ENCODE measurements at regions of chr15 and their contacts with region 1.

Region 1: GRCh38 chr15:78108299-78109084 is 16.1 kb downstream of the SH2D7 start:
- DNase-seq: peak; percentile 92
- ATAC-seq: peak; percentile 78
- H3K4me3 Mint-ChIP-seq: no peak overlapping the region
- H3K27ac Mint-ChIP-seq: peak overlapping the region; percentile 74
- H3K4me1 Mint-ChIP-seq: peaks cover 60% of the 10 kb centered on the region
- H3K27me3 Mint-ChIP-seq: no peaks in the 10 kb centered on the region

Region 2: DNA sequence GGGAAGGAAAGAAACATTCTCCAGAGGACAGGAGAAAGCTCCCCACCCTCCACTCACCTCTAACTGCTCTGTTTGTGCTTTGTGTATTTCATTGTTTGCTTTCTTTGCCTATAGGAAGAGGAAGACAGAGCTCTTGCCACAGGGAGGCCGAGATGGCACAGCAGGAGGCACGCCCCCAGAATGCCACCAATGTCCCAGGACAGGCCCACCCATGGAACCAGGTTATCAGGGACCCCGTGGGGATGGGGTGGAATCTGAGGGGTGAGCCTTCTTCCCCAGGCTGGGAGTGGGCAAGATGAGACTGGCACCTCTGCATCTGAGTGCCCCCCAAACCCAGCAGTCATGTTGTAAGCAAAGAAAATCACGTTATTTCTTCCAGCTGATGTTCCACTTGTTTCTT is 186.8 kb before region 1 on chr15:
- CTCF ChIA-PET with region 1: no interaction called
- POLR2A ChIA-PET with region 1: no interaction called
- DNase-seq: no peak
- ATAC-seq: no peak
- H3K4me3 Mint-ChIP-seq: no peak overlapping the region
- H3K27ac Mint-ChIP-seq: no peak overlapping the region
- H3K4me1 Mint-ChIP-seq: no peaks in the 10 kb centered on the region
- H3K27me3 Mint-ChIP-seq: peaks cover 5% of the 10 kb centered on the region

Region 3: GRCh38 chr15:78000091-78000926 is 108.2 kb before region 1 on chr15:
- CTCF ChIA-PET with region 1: interaction called, 62 read pairs
- POLR2A ChIA-PET with region 1: no interaction called
- DNase-seq: peak; percentile 77
- ATAC-seq: peak; percentile 89
- H3K4me3 Mint-ChIP-seq: no peak overlapping the region
- H3K27ac Mint-ChIP-seq: peak overlapping the region; percentile 79
- H3K4me1 Mint-ChIP-seq: peaks cover 23% of the 10 kb centered on the region
- H3K27me3 Mint-ChIP-seq: no peaks in the 10 kb centered on the region

Region 4: DNA sequence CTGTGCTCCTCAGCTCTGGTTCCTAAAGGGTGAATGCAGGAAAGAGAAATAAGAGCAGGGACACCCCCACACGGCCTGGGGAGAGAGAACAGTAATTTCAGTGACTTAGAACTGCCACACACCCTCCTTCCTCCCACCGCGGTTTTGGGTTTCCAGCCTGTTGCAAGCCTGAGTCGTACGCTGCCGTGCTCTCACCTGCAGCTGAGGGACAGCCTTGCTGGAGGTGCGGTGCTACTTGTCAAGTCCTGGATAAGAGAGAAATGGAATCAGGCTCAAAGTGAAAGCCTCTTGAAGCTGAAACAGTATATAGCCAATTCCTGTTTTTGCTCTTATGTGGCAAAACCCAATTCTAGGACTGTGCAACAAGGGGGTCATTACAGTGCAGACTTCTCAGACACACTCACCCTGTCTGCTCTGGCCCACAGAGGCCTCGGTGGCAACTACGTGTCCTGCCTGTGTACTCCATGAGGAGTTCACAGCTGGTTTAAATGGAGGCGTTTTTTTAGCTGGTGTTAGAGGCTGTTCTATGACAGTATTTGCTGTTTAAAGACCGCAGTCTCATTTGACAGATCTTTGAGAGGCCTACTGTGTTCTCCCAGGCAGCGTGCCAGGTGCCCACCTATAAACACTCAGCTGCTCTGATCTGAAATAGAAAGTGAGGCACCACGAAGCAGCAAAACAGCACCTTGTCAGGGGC is 73.8 kb before region 1 on chr15:
- CTCF ChIA-PET with region 1: interaction called, 55 read pairs
- POLR2A ChIA-PET with region 1: interaction called, 4 read pairs
- DNase-seq: peak; percentile 90
- ATAC-seq: peak; percentile 91
- H3K4me3 Mint-ChIP-seq: peak overlapping the region; percentile 64
- H3K27ac Mint-ChIP-seq: peak overlapping the region; percentile 79
- H3K4me1 Mint-ChIP-seq: peaks cover 88% of the 10 kb centered on the region
- H3K27me3 Mint-ChIP-seq: no peaks in the 10 kb centered on the region

Region 5: GRCh38 chr15:78056714-78057269 is 51.7 kb before region 1 on chr15:
- CTCF ChIA-PET with region 1: interaction called, 60 read pairs
- POLR2A ChIA-PET with region 1: interaction called, 3 read pairs
- DNase-seq: no peak
- ATAC-seq: peak; percentile 32
- H3K4me3 Mint-ChIP-seq: no peak overlapping the region
- H3K27ac Mint-ChIP-seq: peak overlapping the region; percentile 82
- H3K4me1 Mint-ChIP-seq: peaks cover 85% of the 10 kb centered on the region
- H3K27me3 Mint-ChIP-seq: no peaks in the 10 kb centered on the region

Region 6: DNA sequence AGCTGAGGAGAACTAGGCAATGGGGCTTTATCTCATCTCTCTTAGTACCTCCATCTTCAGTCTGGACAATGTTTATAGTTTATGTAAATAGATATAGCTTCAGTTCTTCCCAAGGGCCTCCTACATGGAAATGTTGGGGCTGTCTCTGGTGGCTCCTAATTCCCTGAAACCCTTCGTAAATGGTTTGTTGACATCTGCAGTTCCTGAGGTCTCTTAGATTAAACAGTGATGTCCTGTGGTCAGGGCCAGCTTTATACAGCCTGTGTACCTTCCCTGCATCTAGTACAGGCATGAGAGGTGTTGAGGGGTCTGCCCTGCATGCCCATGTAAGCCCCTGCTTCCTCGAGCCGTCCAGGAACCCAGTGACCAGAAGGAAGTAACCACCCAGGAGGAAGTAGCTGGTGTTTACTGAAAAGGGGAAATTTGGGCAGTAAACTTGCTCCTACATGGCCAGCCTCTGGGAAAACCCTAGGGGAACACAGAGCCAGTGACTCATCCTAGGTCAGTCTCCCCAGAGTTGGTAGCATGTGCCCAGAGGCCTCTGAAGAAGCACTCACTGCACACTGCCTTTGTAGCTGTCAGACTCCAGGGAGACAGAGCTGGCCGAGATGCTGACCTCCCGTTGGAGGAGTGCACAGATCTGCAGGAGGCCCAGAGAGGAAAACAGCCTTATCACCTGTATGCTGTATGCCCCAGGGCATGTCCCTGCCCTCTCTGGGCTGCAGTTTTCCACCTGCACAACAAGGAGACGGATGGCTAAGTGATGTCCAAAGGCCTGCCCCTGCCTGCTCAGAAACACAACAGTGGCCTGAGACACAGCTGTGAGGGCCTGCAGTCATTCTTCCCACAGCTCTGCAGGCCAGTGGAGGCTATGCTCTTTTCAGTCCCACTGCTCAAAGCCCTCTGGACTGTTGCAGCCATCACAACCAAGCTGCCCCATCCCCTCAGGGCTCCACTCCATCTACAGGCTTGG is 26.1 kb before region 1 on chr15:
- CTCF ChIA-PET with region 1: interaction called, 25 read pairs
- POLR2A ChIA-PET with region 1: interaction called, 7 read pairs
- DNase-seq: no peak
- ATAC-seq: no peak
- H3K4me3 Mint-ChIP-seq: no peak overlapping the region
- H3K27ac Mint-ChIP-seq: peak overlapping the region; percentile 80
- H3K4me1 Mint-ChIP-seq: peaks cover 53% of the 10 kb centered on the region
- H3K27me3 Mint-ChIP-seq: no peaks in the 10 kb centered on the region

Region 7: DNA sequence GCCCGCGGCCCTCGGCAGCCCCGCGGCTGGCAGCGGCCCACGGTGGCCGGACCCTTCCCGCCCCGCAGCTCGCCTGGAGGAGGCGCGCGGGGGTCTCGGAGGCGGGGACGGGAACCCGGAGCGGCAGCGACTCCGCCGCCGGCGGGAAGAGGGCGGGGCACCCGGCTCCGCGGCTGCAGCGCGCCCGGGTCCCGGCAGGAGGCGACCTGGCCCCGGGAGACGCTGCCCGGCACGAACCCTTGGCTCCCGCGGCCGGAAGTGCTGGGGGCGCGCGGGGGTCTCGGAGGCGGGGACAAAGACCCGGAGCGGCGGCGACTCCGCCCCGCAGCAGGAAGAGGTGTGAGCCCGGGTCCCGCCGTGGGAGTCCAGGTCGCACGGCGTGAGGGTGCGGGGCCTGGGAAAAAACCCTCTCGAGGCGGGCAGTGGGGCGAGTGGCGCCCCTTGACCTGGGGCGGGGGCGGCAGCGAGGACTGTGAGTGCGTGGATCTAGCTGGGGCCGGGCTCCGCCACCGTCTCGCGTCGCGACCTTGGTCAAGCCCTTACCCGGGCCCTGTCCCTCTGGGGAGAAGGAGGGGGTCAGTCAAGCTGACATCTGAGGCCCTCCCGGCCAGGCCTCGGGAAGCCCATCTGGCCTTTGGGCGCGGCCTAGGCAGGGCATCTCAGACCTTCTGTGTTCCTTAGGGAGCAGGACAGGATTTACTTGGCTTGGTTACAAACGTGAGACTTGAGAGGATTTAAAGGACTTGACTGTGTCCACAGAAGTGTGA is 23.0 kb after region 1 on chr15 and contains the start of gene CIB2:
- CTCF ChIA-PET with region 1: interaction called, 14 read pairs
- POLR2A ChIA-PET with region 1: interaction called, 3 read pairs
- DNase-seq: peak; percentile 79
- ATAC-seq: peak; percentile 90
- H3K4me3 Mint-ChIP-seq: peak within 1 kb of the TSS; percentile 78
- H3K27ac Mint-ChIP-seq: peak within 1 kb of the TSS; percentile 73
- H3K4me1 Mint-ChIP-seq: peaks cover 24% of the 10 kb centered on the region
- H3K27me3 Mint-ChIP-seq: no peaks in the 10 kb centered on the region
- total RNA-seq, gene CIB2: 1.4 to 2.2 TPM

Region 8: DNA sequence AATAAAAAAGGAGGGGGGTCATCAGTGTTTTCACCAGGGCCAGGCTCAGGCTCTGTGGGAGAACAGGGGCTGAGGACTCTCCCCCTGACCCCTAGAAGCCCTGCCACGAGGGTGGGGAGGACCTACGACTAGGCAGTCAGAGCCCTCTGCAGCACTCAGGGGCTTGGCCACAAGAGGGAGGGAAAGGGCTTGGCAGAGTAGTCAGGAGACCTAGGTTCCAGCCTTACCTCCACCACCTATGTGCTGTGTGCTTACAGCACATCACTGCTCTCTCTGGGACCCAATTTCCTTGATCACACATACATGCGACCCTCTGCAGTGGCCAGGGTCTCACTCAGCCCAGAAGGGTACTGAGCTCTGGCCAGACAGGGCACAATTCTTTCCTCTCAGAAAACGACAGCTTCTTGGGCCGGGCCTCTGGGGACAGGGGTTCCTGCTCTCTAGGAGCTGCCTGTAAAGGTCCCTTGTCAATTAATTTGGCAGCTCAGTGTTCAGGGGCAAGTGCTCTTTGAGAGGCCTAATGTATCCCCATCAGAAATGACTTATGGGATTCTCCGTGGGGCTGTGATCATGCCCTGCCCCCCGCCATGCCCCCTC is 207.3 kb after region 1 on chr15:
- CTCF ChIA-PET with region 1: no interaction called
- POLR2A ChIA-PET with region 1: no interaction called
- DNase-seq: peak; percentile 29
- ATAC-seq: peak; percentile 35
- H3K4me3 Mint-ChIP-seq: no peak overlapping the region
- H3K27ac Mint-ChIP-seq: no peak overlapping the region
- H3K4me1 Mint-ChIP-seq: no peaks in the 10 kb centered on the region
- H3K27me3 Mint-ChIP-seq: no peaks in the 10 kb centered on the region